ENCODE measurements at regions of chr1 and their contacts with region 1.

Region 1: GRCh38 chr1:983799-984473 is 2.0 kb upstream of the PERM1 start:
- DNase-seq: peak; percentile 85
- ATAC-seq: peak; percentile 92
- H3K4me3 Mint-ChIP-seq: no peak overlapping the region
- H3K27ac Mint-ChIP-seq: no peak overlapping the region
- H3K4me1 Mint-ChIP-seq: no peaks in the 10 kb centered on the region
- H3K27me3 Mint-ChIP-seq: peaks cover 59% of the 10 kb centered on the region
- CTCF ChIP-seq: peak; percentile 98

Region 2: GRCh38 chr1:966611-967300 is 17.2 kb before region 1 on chr1:
- CTCF ChIA-PET with region 1: interaction called, 12 read pairs
- POLR2A ChIA-PET with region 1: no interaction called
- DNase-seq: peak; percentile 69
- ATAC-seq: peak; percentile 46
- H3K4me3 Mint-ChIP-seq: peak overlapping the region; percentile 62
- H3K27ac Mint-ChIP-seq: no peak overlapping the region
- H3K4me1 Mint-ChIP-seq: no peaks in the 10 kb centered on the region
- H3K27me3 Mint-ChIP-seq: peaks cover 40% of the 10 kb centered on the region
- CTCF ChIP-seq: no peak

Region 3: GRCh38 chr1:1013105-1013921 is 29.4 kb after region 1 on chr1 and contains the start of gene ISG15:
- CTCF ChIA-PET with region 1: interaction called, 13 read pairs
- POLR2A ChIA-PET with region 1: no interaction called
- DNase-seq: peak; percentile 88
- ATAC-seq: peak; percentile 78
- H3K4me3 Mint-ChIP-seq: peak within 1 kb of the TSS; percentile 78
- H3K27ac Mint-ChIP-seq: peak within 1 kb of the TSS; percentile 95
- H3K4me1 Mint-ChIP-seq: peaks cover 29% of the 10 kb centered on the region
- H3K27me3 Mint-ChIP-seq: peaks cover 48% of the 10 kb centered on the region
- CTCF ChIP-seq: no peak
- total RNA-seq, gene ISG15: 29.5 to 38.3 TPM (median 36.1 TPM) in 3 replicates